Naive thymus-derived CD4-positive, alpha-beta T cell (primary cell): ENCODE measurements at regions of chr17 and their contacts with region 1.

Region 1: DNA sequence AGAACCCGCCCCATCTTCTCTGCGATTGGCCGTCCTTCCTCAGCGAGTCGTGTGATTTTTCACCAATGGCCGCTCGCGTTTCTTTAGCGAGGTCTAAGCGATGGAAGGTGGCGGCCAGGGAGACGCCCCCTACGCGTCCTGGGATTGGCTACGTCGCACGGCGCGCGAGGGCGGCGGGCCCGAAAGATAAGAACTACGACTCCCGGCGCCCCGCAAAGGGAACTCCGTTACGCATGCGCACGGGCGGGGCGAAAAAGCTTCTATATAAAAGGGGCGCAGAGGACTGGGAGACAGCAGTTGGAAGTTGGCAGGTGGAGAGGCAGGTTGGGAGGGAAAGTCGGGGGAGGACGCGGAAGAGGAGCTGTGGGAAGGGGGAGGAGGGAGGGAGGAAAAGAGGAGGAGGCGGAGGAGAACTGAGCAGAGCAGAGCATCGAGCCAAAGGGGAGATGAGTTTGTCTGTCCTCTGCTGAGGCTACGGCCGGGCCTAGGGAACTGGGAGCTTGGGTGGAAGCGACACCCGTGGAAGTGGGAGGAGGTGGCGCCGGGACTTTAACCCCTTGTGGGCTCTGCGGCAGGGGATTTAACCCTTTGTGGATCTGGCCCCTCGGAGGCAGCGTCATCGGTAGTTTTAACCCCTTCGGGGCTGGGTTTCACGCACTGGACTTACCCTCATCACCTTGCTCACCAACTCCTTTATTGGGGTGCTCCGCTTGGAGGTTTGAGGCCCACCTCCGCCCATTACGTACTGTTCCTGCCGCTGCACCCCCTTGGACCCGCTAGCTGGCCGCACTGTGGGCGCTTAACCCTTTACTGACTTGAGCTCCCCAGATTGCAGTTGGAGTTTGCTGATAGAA is at the start of gene HEXIM1:
- DNase-seq: peak; percentile 98 to 100 (median 100)
- ATAC-seq: peak; percentile 87
- H3K4me3 ChIP-seq: peak within 1 kb of the TSS; percentile 93
- H3K4me3 Mint-ChIP-seq: peak within 1 kb of the TSS; percentile 89 to 100 (median 99)
- H3K27ac ChIP-seq: peak within 1 kb of the TSS; percentile 91
- H3K27ac Mint-ChIP-seq: peak within 1 kb of the TSS; percentile 99 to 100 (median 100)
- H3K4me1 ChIP-seq: peaks cover 21 to 35% of the 10 kb centered on the region in 2 donors
- H3K4me1 Mint-ChIP-seq: peaks cover 18 to 68% (median 54%) of the 10 kb centered on the region in 7 donors
- H3K27me3 ChIP-seq: no peaks in the 10 kb centered on the region
- H3K27me3 Mint-ChIP-seq: peaks cover 0 to 7% (median 0%) of the 10 kb centered on the region in 5 donors
- total RNA-seq, gene HEXIM1: 28.5 to 41.3 (median 37.6) TPM

Region 2: GRCh38 chr17:44324571-44325275 is 823.7 kb before region 1 on chr17 and contains the start of gene SLC25A39:
- CTCF ChIA-PET with region 1: interaction called, 4 read pairs
- POLR2A ChIA-PET with region 1: no interaction called
- intact Hi-C with region 1: loop called in 1 of 2 experiments (anchors 5 kb)
- DNase-seq: peak; percentile 87 to 99 (median 94)
- ATAC-seq: peak; percentile 91
- H3K4me3 ChIP-seq: peak within 1 kb of the TSS; percentile 98
- H3K4me3 Mint-ChIP-seq: peak within 1 kb of the TSS; percentile 90 to 96 (median 93)
- H3K27ac ChIP-seq: peak within 1 kb of the TSS; percentile 83
- H3K27ac Mint-ChIP-seq: peak within 1 kb of the TSS; percentile 89 to 98 (median 95)
- H3K4me1 ChIP-seq: peaks cover 13 to 17% of the 10 kb centered on the region in 2 donors
- H3K4me1 Mint-ChIP-seq: peaks cover 0 to 38% (median 19%) of the 10 kb centered on the region in 7 donors
- H3K27me3 ChIP-seq: no peaks in the 10 kb centered on the region
- H3K27me3 Mint-ChIP-seq: no peaks in the 10 kb centered on the region
- total RNA-seq, gene SLC25A39: 75.4 to 107 (median 101) TPM

Region 3: DNA sequence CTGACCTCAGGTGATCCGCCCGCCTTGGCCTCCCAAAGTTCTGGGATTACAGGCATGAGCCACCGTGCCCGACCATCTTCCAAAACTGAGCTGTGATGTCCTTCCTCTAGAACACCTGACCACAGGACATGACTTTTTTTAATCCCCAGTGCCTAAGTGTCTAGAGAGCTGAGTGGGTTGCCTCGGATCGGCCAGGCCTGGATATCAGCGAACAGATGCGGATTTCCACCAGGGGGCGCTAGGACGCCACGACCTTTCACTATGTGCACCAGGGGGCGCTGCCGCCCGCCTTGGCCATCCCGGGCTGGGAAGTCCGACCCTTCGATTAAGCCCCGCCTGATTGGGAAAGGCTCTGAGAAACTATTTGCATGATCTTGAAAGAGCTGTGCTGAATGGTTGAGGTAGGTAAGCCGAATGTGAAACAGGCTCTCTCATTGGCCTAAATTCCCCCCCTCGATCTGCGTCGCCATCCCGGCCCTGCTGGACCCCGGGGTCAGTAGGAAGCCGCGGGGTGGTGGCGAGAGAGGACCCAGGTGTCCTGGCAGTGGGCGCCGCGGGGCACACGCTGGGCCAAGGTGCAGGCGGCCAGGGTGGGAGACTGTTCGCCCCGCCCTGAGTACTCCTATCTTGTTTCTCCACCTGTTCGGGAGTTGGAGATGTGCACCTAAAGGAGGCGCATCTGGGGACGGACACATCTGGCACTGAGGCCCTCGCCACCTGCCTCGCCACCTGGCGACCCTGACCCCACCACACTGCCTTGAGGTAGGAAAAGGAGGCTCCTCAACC is 13.0 kb before region 1 on chr17 and contains the start of gene ACBD4:
- CTCF ChIA-PET with region 1: interaction called, 114 read pairs
- POLR2A ChIA-PET with region 1: interaction called, 232 read pairs
- intact Hi-C with region 1: loop called (anchors 1 kb)
- DNase-seq: peak; percentile 95 to 100 (median 98)
- ATAC-seq: peak; percentile 93
- H3K4me3 ChIP-seq: peak within 1 kb of the TSS; percentile 94
- H3K4me3 Mint-ChIP-seq: peak within 1 kb of the TSS; percentile 87 to 95 (median 90)
- H3K27ac ChIP-seq: peak within 1 kb of the TSS; percentile 76
- H3K27ac Mint-ChIP-seq: peak within 1 kb of the TSS; percentile 75 to 92 (median 82)
- H3K4me1 ChIP-seq: peaks cover 12% of the 10 kb centered on the region in 2 donors
- H3K4me1 Mint-ChIP-seq: peaks cover 9 to 25% (median 21%) of the 10 kb centered on the region in 7 donors
- H3K27me3 ChIP-seq: no peaks in the 10 kb centered on the region
- H3K27me3 Mint-ChIP-seq: peaks cover 0 to 8% (median 0%) of the 10 kb centered on the region in 5 donors
- total RNA-seq, gene ACBD4: 17.9 to 59.5 (median 31.3) TPM

Region 4: DNA sequence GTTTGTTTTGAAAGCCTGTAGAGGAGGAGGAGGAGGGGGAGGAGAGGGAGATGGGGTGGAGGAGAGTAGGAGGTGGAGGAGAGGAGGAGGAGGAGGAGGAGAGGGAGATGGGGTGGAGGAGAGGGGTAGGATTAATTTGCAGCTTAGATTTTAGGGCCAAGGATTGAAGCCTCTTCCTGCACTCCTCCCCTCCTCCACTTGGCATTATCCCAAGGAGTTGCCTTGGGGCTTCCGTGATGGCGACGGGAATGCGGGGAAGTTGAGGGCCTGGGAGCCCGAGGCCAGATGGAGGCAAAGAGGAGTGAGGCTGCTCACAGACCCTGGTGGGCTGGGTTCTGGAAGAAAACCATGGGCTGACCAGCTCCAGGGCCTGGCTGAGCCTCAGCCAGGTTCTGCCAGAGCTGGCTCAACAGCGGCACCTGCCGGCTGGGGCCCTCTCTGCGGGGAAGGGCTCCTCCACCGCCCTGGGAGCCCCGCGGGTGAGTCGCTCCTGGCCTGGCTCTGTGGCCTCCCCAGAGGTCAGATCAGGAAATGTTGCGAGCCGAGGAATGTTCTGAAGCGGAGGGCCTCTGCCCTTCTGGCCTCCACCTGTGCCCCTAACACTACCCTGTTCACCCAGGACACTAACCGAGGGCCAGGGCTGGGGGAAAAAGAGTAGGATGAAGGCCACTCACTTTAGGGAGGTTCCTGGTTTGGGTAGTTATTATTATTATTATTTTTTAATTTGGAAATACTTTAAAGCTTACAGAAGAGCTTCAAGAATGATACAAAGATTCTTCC is 49.3 kb after region 1 on chr17:
- CTCF ChIA-PET with region 1: interaction called, 86 read pairs
- POLR2A ChIA-PET with region 1: interaction called, 44 read pairs
- intact Hi-C with region 1: loop called (anchors 1 to 2 kb)
- DNase-seq: peak; percentile 62 to 94 (median 79)
- ATAC-seq: peak; percentile 99
- H3K4me3 ChIP-seq: no peak overlapping the region
- H3K4me3 Mint-ChIP-seq: no peak overlapping the region
- H3K27ac ChIP-seq: no peak overlapping the region
- H3K27ac Mint-ChIP-seq: no peak overlapping the region
- H3K4me1 ChIP-seq: peaks cover 0 to 5% of the 10 kb centered on the region in 2 donors
- H3K4me1 Mint-ChIP-seq: peaks cover 0 to 9% (median 3%) of the 10 kb centered on the region in 7 donors
- H3K27me3 ChIP-seq: no peaks in the 10 kb centered on the region
- H3K27me3 Mint-ChIP-seq: no peaks in the 10 kb centered on the region

Region 5: GRCh38 chr17:45247429-45248131 is 99.2 kb after region 1 on chr17:
- CTCF ChIA-PET with region 1: interaction called, 5 read pairs
- POLR2A ChIA-PET with region 1: interaction called, 27 read pairs
- intact Hi-C with region 1: loop called (anchors 1 kb)
- DNase-seq: peak; percentile 83 to 96 (median 87)
- ATAC-seq: peak; percentile 88
- H3K4me3 ChIP-seq: peak overlapping the region; percentile 89
- H3K4me3 Mint-ChIP-seq: peak overlapping the region; percentile 88 to 93 (median 90)
- H3K27ac ChIP-seq: peak overlapping the region; percentile 95
- H3K27ac Mint-ChIP-seq: peak overlapping the region; percentile 89 to 98 (median 96)
- H3K4me1 ChIP-seq: peaks cover 26 to 42% of the 10 kb centered on the region in 2 donors
- H3K4me1 Mint-ChIP-seq: peaks cover 30 to 68% (median 61%) of the 10 kb centered on the region in 7 donors
- H3K27me3 ChIP-seq: no peaks in the 10 kb centered on the region
- H3K27me3 Mint-ChIP-seq: no peaks in the 10 kb centered on the region

Region 6: GRCh38 chr17:46193626-46194392 is 1045.4 kb after region 1 on chr17:
- CTCF ChIA-PET with region 1: no interaction called
- POLR2A ChIA-PET with region 1: no interaction called
- intact Hi-C with region 1: loop called (anchors 1 to 5 kb)
- DNase-seq: peak; percentile 85 to 95 (median 92)
- ATAC-seq: peak; percentile 80
- H3K4me3 ChIP-seq: peak overlapping the region; percentile 84
- H3K4me3 Mint-ChIP-seq: peak overlapping the region; percentile 75 to 98 (median 84)
- H3K27ac ChIP-seq: peak overlapping the region; percentile 93
- H3K27ac Mint-ChIP-seq: peak overlapping the region; percentile 87 to 100 (median 97)
- H3K4me1 ChIP-seq: peaks cover 47 to 51% of the 10 kb centered on the region in 2 donors
- H3K4me1 Mint-ChIP-seq: peaks cover 44 to 67% (median 61%) of the 10 kb centered on the region in 7 donors
- H3K27me3 ChIP-seq: no peaks in the 10 kb centered on the region
- H3K27me3 Mint-ChIP-seq: no peaks in the 10 kb centered on the region